Heart left ventricle (tissue), 16 donors: ENCODE measurements at regions of chr5 and their contacts with region 1.

Region 1: GRCh38 chr5:129904102-129904666 is at the start of gene CHSY3:
- DNase-seq: peak; percentile 83 to 91 (median 84)
- ATAC-seq: peak; percentile 80 to 97 (median 94)
- H3K4me3 ChIP-seq: peak within 1 kb of the TSS; percentile 64 to 85 (median 72)
- H3K27ac ChIP-seq: peak within 1 kb of the TSS; percentile 29 to 89 (median 73)
- H3K4me1 ChIP-seq: peaks cover 0 to 33% (median 12%) of the 10 kb centered on the region in 12 donors
- H3K27me3 ChIP-seq: peaks cover 0 to 34% (median 0%) of the 10 kb centered on the region in 9 donors
- CTCF ChIP-seq: peak in 3 of 12 donors; percentile 11 to 30 (median 28)
- POLR2A ChIP-seq: peak in 1 of 2 donors; percentile 8
- total RNA-seq, gene CHSY3: 0.52 to 2.9 (median 1.1) TPM

Region 2: DNA sequence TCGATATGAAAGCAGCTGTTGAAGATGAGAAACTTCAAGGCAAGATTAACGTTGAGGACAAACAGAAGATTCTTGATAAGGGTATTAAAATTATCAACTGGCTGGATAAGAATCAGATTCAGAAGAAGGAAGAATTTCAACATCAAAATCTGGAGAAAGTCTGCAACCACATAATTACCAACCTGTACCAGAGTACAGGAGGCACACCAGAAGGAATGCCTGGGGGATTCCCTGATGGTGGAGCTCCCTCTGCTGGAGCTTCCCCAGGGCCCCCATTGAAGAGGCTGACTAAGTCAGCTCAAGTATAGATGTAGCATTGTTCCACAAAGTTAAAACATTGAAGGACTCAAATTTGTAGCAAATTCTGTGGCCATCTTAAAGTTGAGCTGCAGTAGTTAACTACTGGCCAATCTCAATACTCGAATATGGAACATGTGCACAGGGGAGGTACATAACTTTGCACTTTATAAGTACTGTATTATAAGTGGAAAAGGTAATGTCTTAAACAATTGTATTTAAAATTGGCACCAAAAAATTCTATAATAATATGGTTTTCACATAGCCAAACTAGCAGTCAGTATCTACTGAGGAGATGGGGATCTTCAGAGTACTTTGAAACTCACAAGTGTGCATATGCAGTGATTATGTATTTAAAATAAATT is 237.6 kb after region 1 on chr5:
- intact Hi-C with region 1: loop called in 5 of 10 experiments (anchors 1 to 10 kb)
- DNase-seq: peak in 1 of 5 donors; percentile 18
- ATAC-seq: peak in 1 of 4 donors; percentile 54
- H3K4me3 ChIP-seq: no peak overlapping the region
- H3K27ac ChIP-seq: no peak overlapping the region
- H3K4me1 ChIP-seq: peaks cover 0 to 6% (median 0%) of the 10 kb centered on the region in 12 donors
- H3K27me3 ChIP-seq: no peaks in the 10 kb centered on the region
- CTCF ChIP-seq: peak in 11 of 12 donors; percentile 31 to 65 (median 39)
- POLR2A ChIP-seq: no peak

Region 3: GRCh38 chr5:131109540-131110255 is 1205.5 kb after region 1 on chr5:
- intact Hi-C with region 1: loop called in 7 of 10 experiments (anchors 2 to 5 kb)
- DNase-seq: no peak
- ATAC-seq: peak in 2 of 4 donors; percentile 58 to 68
- H3K4me3 ChIP-seq: no peak overlapping the region
- H3K27ac ChIP-seq: no peak overlapping the region
- H3K4me1 ChIP-seq: peaks cover 0 to 5% (median 0%) of the 10 kb centered on the region in 12 donors
- H3K27me3 ChIP-seq: no peaks in the 10 kb centered on the region
- CTCF ChIP-seq: peak; percentile 44 to 81 (median 68)
- POLR2A ChIP-seq: no peak

Region 4: DNA sequence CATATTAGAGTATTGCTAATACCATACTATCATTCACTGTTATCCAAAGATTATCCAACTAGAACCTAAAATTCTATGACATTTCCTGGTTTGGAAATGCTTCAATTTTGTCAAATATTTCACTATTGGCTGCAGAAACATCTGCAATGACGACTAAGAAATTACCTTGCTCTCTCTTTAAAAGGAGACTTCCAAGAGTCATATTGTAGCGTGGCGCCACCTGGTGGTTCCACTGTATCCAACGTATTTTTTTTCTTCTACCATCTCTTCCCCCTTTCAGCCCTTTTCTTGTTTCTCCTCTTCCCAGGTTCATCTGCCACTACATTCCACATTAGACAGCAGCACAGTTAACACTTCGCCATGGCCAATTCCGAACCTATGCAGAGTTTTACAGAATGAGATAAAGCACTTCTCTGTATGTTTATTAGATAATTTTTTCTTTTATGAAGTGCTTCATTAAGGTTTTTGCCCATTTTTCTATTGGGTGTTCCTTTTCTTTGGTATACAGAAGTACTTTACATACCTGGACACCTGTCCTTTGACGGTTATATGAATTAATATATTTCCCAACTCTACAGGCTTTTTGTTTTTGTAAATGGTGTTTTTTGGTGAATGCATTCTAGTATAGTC is 1513.2 kb after region 1 on chr5:
- intact Hi-C with region 1: loop called in 4 of 10 experiments (anchors 10 kb)
- DNase-seq: peak; percentile 49 to 86 (median 70)
- ATAC-seq: peak in 2 of 4 donors; percentile 47 to 59
- H3K4me3 ChIP-seq: no peak overlapping the region
- H3K27ac ChIP-seq: no peak overlapping the region
- H3K4me1 ChIP-seq: peaks cover 0 to 6% (median 0%) of the 10 kb centered on the region in 12 donors
- H3K27me3 ChIP-seq: no peaks in the 10 kb centered on the region
- CTCF ChIP-seq: peak; percentile 71 to 93 (median 84)
- POLR2A ChIP-seq: no peak